B cell (primary cell): ENCODE measurements at regions of chr16 and their contacts with region 1.

Region 1: DNA sequence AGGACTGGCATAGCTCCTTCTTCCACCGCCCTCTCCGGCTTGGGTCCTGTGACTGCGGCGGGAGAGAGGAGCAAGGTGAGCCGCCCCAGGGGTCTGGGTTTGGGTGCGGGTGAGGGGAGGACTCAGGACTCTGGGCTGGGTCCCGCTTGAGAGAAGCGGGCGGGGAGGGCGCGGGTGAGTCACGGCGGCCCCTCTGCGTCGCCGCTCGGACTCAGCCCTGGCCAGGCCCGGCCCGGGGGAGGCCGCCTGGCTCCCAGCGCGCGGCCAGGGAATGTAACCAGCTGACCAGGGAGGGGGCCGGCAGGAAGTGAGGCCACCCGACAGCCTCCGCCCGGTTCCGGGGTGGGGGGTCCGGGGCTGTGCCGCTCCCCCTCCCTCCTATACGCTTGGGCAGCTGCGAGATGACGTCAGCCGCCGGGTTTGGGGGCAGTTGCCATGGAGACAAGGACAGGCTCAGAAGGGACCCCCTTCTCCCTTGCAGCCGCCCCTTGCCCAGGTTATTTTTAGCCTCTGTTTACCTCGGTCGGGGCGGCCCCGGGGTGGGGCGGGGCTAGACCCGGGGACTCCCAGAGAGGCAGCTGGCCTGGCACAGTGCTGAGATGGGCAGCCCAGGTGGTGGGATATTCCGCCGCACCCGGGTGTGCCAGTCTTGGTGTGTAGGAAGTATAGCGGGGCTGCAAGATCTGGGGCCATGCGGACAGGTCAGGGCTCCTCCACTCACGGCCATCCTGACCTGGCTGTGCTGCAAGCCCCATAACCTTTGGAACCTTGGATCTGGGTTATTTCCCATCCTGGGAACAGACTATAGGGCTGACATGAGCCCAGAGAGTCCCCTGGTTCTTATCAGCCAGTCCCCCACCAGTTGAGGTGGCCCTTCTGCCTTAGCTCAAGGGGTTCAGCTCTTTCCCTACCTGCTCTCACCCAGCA is 1.6 kb downstream of the RIPOR1 start:
- DNase-seq: peak; percentile 94
- ATAC-seq: peak; percentile 59
- H3K4me3 ChIP-seq: peak overlapping the region; percentile 65 to 92 (median 85)
- H3K4me3 Mint-ChIP-seq: peak overlapping the region; percentile 95
- H3K27ac ChIP-seq: peak overlapping the region; percentile 96 to 100
- H3K27ac Mint-ChIP-seq: peak overlapping the region; percentile 98
- H3K4me1 ChIP-seq: peaks cover 38 to 70% of the 10 kb centered on the region in 2 donors
- H3K4me1 Mint-ChIP-seq: peaks cover 63% of the 10 kb centered on the region
- H3K27me3 ChIP-seq: no peaks in the 10 kb centered on the region
- H3K27me3 Mint-ChIP-seq: no peaks in the 10 kb centered on the region
- CTCF ChIP-seq: no peak

Region 2: GRCh38 chr16:66830422-66831404 is 699.6 kb before region 1 on chr16 and contains the start of gene NAE1:
- CTCF ChIA-PET with region 1: no interaction called
- POLR2A ChIA-PET with region 1: no interaction called
- intact Hi-C with region 1: no loop called
- DNase-seq: peak; percentile 95
- ATAC-seq: peak; percentile 98
- H3K4me3 ChIP-seq: peak within 1 kb of the TSS; percentile 57 to 87 (median 79)
- H3K4me3 Mint-ChIP-seq: peak within 1 kb of the TSS; percentile 77
- H3K27ac ChIP-seq: peak within 1 kb of the TSS in 1 of 2 donors; percentile 76
- H3K27ac Mint-ChIP-seq: peak within 1 kb of the TSS; percentile 67
- H3K4me1 ChIP-seq: peaks cover 10 to 22% of the 10 kb centered on the region in 2 donors
- H3K4me1 Mint-ChIP-seq: peaks cover 25% of the 10 kb centered on the region
- H3K27me3 ChIP-seq: peaks cover 0 to 3% (median 0%) of the 10 kb centered on the region in 4 experiments
- H3K27me3 Mint-ChIP-seq: peaks cover 5% of the 10 kb centered on the region
- CTCF ChIP-seq: peak; percentile 99
- total RNA-seq, gene NAE1: 57.6 and 62.5 TPM in 2 replicates

Region 3: GRCh38 chr16:67499106-67499505 is 31.2 kb before region 1 on chr16:
- CTCF ChIA-PET with region 1: interaction called, 817 read pairs
- POLR2A ChIA-PET with region 1: no interaction called
- intact Hi-C with region 1: no loop called
- DNase-seq: no peak
- ATAC-seq: no peak
- H3K4me3 ChIP-seq: no peak overlapping the region
- H3K4me3 Mint-ChIP-seq: no peak overlapping the region
- H3K27ac ChIP-seq: no peak overlapping the region
- H3K27ac Mint-ChIP-seq: peak overlapping the region; percentile 70
- H3K4me1 ChIP-seq: peaks cover 13 to 17% of the 10 kb centered on the region in 2 donors
- H3K4me1 Mint-ChIP-seq: peaks cover 29% of the 10 kb centered on the region
- H3K27me3 ChIP-seq: no peaks in the 10 kb centered on the region
- H3K27me3 Mint-ChIP-seq: no peaks in the 10 kb centered on the region
- CTCF ChIP-seq: no peak

Region 4: GRCh38 chr16:67660564-67661028 is 130.3 kb after region 1 on chr16 and contains the start of gene PARD6A:
- CTCF ChIA-PET with region 1: interaction called, 3 read pairs
- POLR2A ChIA-PET with region 1: interaction called, 13 read pairs
- intact Hi-C with region 1: loop called (anchors 1 kb)
- DNase-seq: peak; percentile 99
- ATAC-seq: peak; percentile 83
- H3K4me3 ChIP-seq: peak within 1 kb of the TSS; percentile 80 to 99 (median 95)
- H3K4me3 Mint-ChIP-seq: peak within 1 kb of the TSS; percentile 97
- H3K27ac ChIP-seq: peak within 1 kb of the TSS; percentile 88 to 93
- H3K27ac Mint-ChIP-seq: peak within 1 kb of the TSS; percentile 97
- H3K4me1 ChIP-seq: peaks cover 14 to 24% of the 10 kb centered on the region in 2 donors
- H3K4me1 Mint-ChIP-seq: peaks cover 35% of the 10 kb centered on the region
- H3K27me3 ChIP-seq: no peaks in the 10 kb centered on the region
- H3K27me3 Mint-ChIP-seq: no peaks in the 10 kb centered on the region
- CTCF ChIP-seq: no peak
- total RNA-seq, gene PARD6A: 13.6 and 14.8 TPM in 2 replicates